Common myeloid progenitor, CD34-positive (primary cell): ENCODE measurements at regions of chr12 and their contacts with region 1.

Region 1: DNA sequence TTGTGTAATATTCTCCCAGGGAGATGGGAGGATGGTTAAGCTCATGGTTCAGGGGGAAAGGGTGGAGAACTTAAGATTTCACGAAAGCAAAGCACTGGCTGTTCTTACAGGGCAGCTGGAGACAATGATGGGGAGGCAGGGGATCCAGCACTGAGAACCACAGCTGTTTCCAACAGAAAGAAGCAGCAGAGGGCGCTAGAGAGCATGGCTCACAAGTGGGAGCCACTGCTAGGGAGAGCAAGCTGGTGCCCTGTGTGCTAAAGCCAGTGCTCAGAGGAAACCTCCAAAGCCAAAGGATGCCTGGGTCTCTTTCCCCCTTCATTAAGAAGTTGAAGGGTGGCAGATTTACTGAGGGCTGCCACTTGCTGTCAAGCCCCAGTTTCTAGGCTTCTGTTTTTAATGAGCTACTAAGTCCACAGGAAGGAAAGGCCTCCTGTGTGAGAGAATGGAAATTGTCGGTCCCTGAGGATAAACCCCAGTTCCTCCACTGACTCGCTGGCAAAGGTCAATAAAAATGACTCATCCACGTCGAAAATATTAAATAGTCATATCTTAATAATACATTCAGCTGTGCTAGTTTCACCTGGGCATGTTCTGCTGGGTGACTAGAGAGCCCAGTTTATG is 199.7 kb downstream of the ANO2 start:
- DNase-seq: peak; percentile 72 to 85 (median 82)
- H3K4me3 ChIP-seq: no peak overlapping the region
- H3K27ac ChIP-seq: no peak overlapping the region
- H3K4me1 ChIP-seq: peaks cover 2 to 47% (median 20%) of the 10 kb centered on the region in 4 experiments
- H3K27me3 ChIP-seq: no peaks in the 10 kb centered on the region

Region 2: GRCh38 chr12:5619628-5620027 is 125.7 kb before region 1 on chr12:
- CTCF ChIA-PET with region 1: no interaction called
- POLR2A ChIA-PET with region 1: no interaction called
- DNase-seq: no peak
- H3K4me3 ChIP-seq: no peak overlapping the region
- H3K27ac ChIP-seq: no peak overlapping the region
- H3K4me1 ChIP-seq: no peaks in the 10 kb centered on the region
- H3K27me3 ChIP-seq: no peaks in the 10 kb centered on the region

Region 3: GRCh38 chr12:5718680-5719079 is 26.7 kb before region 1 on chr12:
- CTCF ChIA-PET with region 1: interaction called, 23 read pairs
- POLR2A ChIA-PET with region 1: no interaction called
- DNase-seq: peak in 2 of 3 donors; percentile 35 to 41
- H3K4me3 ChIP-seq: no peak overlapping the region
- H3K27ac ChIP-seq: no peak overlapping the region
- H3K4me1 ChIP-seq: peaks cover 2 to 56% (median 24%) of the 10 kb centered on the region in 4 experiments
- H3K27me3 ChIP-seq: no peaks in the 10 kb centered on the region

Region 4: DNA sequence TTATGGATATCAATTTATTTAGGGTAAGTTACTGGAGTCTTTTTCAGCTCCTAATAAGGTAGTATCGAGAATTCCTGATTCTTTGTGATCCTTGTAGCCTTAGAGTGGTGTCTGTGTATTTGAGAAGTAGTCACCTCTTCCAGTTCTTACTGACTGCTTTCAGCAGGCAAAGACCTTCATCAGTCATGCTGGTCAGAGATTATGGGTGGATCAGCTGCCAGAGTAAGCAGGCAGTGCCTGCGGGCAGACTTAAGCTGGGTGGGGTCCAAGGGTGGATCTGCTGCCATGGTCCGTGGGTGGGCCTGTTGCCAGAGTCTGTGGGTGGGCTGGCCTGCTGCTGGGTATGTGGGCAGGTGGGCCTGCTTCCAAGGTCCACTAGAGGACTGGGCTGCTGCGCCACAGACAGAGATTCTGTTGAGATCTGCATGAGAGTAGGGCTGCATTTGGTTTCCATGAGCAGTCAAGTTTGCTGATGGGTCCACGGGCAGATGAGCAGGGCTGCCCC is 11.0 kb after region 1 on chr12:
- CTCF ChIA-PET with region 1: interaction called, 11 read pairs
- POLR2A ChIA-PET with region 1: interaction called, 3 read pairs
- DNase-seq: no peak
- H3K4me3 ChIP-seq: no peak overlapping the region
- H3K27ac ChIP-seq: no peak overlapping the region
- H3K4me1 ChIP-seq: no peaks in the 10 kb centered on the region
- H3K27me3 ChIP-seq: no peaks in the 10 kb centered on the region

Region 5: GRCh38 chr12:5872735-5873134 is 127.4 kb after region 1 on chr12:
- CTCF ChIA-PET with region 1: interaction called, 18 read pairs
- POLR2A ChIA-PET with region 1: no interaction called
- DNase-seq: peak; percentile 34 to 58 (median 55)
- H3K4me3 ChIP-seq: no peak overlapping the region
- H3K27ac ChIP-seq: no peak overlapping the region
- H3K4me1 ChIP-seq: peaks cover 0 to 14% (median 5%) of the 10 kb centered on the region in 4 experiments
- H3K27me3 ChIP-seq: no peaks in the 10 kb centered on the region